ENCODE measurements at regions of chr12 and their contacts with region 1.

Region 1: GRCh38 chr12:68863109-68863770 is 55.3 kb downstream of the MDM2 start:
- DNase-seq: peak in 1 of 2 donors; percentile 54
- H3K4me3 ChIP-seq: no peak overlapping the region
- CTCF ChIP-seq: no peak
- POLR2A ChIP-seq: no peak

Region 2: GRCh38 chr12:69070319-69071090 is 207.3 kb after region 1 on chr12:
- intact Hi-C with region 1: loop called (anchors 5 kb)
- DNase-seq: peak; percentile 62 to 91
- H3K4me3 ChIP-seq: no peak overlapping the region
- CTCF ChIP-seq: no peak
- POLR2A ChIP-seq: no peak

Measured in lower leg skin (tissue), 4 donors.